ENCODE measurements at regions of chr7 and their contacts with region 1.

Region 1: DNA sequence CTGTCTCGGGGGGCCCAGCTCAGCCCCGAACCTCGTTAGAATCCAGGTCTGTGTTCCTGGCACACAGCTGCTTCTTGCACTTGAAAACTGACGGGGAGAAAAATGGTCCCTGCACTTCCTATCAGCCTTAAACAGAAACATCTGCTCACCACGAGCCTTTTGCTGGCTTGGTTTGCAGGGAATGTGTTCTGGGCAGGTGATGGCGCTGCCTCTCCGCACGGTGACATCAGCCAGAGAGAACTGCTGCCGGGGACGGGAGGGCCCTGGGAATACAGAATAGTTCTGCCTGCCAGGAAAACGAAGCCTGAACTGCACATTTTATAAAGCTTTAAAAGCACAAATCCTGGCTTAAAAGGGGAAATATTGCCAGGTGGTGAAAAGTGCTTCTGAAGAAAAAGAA is 622.5 kb downstream of the TYW1 start:
- DNase-seq: peak; percentile 19
- H3K4me3 ChIP-seq: peak overlapping the region; percentile 23
- H3K27ac ChIP-seq: peak overlapping the region; percentile 75
- H3K4me1 ChIP-seq: peaks cover 19% of the 10 kb centered on the region
- H3K27me3 ChIP-seq: peaks cover 81% of the 10 kb centered on the region
- CTCF ChIP-seq: peak; percentile 18

Region 2: DNA sequence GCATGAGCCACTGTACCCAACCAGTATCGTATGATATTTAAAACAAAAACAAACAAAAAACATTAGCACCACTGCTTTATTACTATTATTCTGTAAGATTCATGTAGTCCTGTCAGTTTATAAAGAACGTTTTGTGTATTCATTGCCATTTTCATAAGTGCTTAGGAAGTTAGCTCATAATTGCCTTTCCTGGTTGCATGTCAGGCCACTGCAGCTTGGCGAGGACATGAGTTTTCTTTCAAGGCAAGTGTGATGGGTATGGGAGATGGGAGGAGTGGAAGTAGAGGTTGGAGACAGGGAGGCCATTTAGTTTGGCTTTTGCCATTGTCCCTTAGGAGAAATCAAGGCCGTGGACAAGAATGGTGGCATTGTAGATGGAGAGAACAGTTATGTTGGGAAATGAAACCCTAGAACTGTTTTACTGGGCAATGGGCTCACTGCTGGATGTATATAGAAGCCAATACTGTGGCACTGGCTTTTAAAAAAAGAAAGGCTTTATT is 573.6 kb before region 1 on chr7:
- intact Hi-C with region 1: no loop called
- DNase-seq: no peak
- H3K4me3 ChIP-seq: no peak overlapping the region
- H3K27ac ChIP-seq: no peak overlapping the region
- H3K4me1 ChIP-seq: peaks cover 29% of the 10 kb centered on the region
- H3K27me3 ChIP-seq: no peaks in the 10 kb centered on the region
- CTCF ChIP-seq: no peak

Region 3: DNA sequence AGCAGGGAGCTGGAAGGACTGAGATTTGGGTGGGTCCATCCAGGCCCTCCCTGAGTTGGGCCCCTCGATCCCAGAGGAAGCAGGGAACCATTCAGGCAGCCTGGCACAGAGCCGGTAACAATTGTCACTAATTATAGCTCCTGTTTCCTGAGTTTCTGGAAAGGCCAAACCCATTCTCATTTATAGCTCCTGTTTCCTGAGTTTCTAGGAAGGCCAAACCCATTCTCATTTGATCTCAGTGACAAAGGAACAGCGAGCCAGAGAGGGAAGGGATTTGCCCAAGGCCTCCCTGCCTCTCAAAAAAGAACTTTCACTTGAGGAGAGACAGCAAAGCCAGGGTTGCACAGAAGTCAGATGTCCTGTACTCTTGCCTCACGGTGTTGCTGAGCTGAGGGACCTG is 100.6 kb before region 1 on chr7:
- intact Hi-C with region 1: loop called (anchors 10 kb)
- DNase-seq: peak; percentile 54
- H3K4me3 ChIP-seq: no peak overlapping the region
- H3K27ac ChIP-seq: peak overlapping the region; percentile 70
- H3K4me1 ChIP-seq: peaks cover 37% of the 10 kb centered on the region
- H3K27me3 ChIP-seq: no peaks in the 10 kb centered on the region
- CTCF ChIP-seq: no peak

Region 4: DNA sequence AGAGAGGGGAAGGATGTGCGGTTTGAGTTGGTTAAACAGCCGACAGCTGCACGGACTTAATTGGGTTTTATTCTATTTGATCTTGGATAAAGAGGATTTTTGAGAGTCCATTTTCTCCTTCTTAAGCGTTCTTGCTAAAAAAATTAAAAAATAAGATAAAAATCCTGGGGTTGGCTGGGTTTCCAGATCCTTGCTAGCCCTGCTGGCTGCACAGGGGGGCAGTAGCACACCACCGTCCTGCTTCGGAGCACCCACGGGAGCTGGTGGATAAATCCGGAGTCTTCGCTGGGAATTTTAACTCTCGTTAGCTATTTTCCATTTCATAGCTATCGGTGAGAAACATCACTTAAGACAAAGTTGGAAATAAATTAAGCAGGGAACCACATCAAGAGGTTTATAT is 169.5 kb after region 1 on chr7:
- intact Hi-C with region 1: no loop called
- DNase-seq: no peak
- H3K4me3 ChIP-seq: no peak overlapping the region
- H3K27ac ChIP-seq: no peak overlapping the region
- H3K4me1 ChIP-seq: no peaks in the 10 kb centered on the region
- H3K27me3 ChIP-seq: peaks cover 67% of the 10 kb centered on the region
- CTCF ChIP-seq: peak; percentile 40

Region 5: DNA sequence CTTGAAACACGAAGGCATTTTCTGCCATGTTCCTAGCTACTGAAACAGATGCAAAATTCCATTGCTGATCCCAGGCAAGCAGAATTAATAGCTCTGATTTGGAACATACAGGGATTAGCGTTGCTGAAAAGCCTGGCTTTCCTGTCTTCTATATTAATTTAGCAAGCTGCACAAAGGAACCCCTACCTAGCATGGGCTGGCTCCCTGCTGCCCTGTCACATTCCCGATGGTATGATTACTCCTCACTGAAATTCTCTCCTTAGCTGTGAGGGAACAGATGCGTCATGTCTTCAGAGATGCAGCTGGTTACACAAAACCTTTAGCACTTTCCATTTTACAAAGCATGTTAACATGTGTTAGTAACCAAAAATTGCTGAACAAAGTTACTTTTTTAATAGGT is 256.4 kb after region 1 on chr7:
- intact Hi-C with region 1: no loop called
- DNase-seq: no peak
- H3K4me3 ChIP-seq: no peak overlapping the region
- H3K27ac ChIP-seq: no peak overlapping the region
- H3K4me1 ChIP-seq: no peaks in the 10 kb centered on the region
- H3K27me3 ChIP-seq: peaks cover 72% of the 10 kb centered on the region
- CTCF ChIP-seq: no peak